Aorta (tissue), 5 donors: ENCODE measurements at regions of chr9 and their contacts with region 1.

Region 1: DNA sequence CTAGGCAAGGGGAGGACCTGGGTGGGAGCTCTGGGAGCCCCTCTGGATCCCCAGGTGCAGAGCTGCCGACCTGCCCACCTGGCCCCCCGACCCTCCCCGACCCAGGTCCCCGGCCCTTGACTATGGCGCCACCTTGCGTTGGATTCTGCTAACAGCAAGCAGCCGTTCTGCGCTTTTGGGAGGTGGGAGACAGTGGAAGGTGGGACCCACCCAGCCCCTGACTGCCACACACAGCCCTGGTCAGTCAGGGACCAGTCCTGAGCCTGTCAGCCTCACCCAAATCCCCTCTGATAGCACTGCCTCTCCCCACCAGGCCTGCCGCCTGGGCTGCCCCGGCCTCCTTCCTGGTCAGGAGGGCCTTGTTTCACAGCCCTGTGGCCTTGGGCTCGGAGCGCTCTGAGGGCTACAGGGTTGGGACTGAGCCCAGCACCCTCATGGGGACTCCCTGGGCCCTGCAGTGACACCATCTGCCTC is 77.9 kb downstream of the HMCN2 start:
- DNase-seq: no peak
- ATAC-seq: no peak
- H3K4me3 ChIP-seq: no peak overlapping the region
- H3K27ac ChIP-seq: no peak overlapping the region
- H3K4me1 ChIP-seq: no peaks in the 10 kb centered on the region
- H3K27me3 ChIP-seq: no peaks in the 10 kb centered on the region

Region 2: GRCh38 chr9:130107234-130107861 is 236.1 kb before region 1 on chr9:
- intact Hi-C with region 1: loop called (anchors 2 to 5 kb)
- DNase-seq: peak; percentile 88 to 94
- ATAC-seq: peak; percentile 81
- H3K4me3 ChIP-seq: no peak overlapping the region
- H3K27ac ChIP-seq: no peak overlapping the region
- H3K4me1 ChIP-seq: no peaks in the 10 kb centered on the region
- H3K27me3 ChIP-seq: no peaks in the 10 kb centered on the region

Region 3: DNA sequence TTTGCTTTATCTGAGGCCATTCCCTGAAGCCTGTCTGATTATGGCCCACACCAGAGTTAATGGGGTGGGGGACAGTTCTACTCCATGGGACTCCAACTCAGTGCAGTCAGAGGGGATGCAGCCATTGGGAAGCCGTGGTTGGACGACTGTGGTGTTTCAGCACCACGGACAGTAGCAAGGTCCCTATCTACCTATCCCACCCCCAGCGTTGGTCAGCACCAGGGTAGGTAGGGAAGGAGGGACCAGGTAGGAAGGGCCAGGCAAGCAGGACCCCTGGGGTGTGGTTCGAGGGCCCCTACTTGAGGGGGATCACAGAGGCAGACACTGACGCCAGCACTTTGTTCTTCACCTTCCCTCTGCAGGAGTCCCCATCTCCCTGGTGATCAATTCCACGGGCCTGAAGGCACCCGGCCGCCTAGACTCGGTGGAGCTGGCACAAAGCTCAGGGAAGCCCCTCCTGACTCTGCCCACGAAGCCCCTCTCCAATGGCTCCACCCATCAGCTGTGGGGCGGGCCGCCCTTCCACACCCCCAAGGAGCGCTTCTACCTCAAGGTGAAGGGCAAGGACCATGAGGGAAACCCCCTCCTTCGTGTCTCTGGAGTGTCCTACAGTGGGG is 44.7 kb before region 1 on chr9:
- intact Hi-C with region 1: no loop called
- DNase-seq: peak; percentile 22 to 70
- ATAC-seq: no peak
- H3K4me3 ChIP-seq: no peak overlapping the region
- H3K27ac ChIP-seq: no peak overlapping the region
- H3K4me1 ChIP-seq: no peaks in the 10 kb centered on the region
- H3K27me3 ChIP-seq: no peaks in the 10 kb centered on the region

Region 4: GRCh38 chr9:130606887-130607600 is 263.6 kb after region 1 on chr9:
- intact Hi-C with region 1: no loop called
- DNase-seq: no peak
- ATAC-seq: no peak
- H3K4me3 ChIP-seq: no peak overlapping the region
- H3K27ac ChIP-seq: no peak overlapping the region
- H3K4me1 ChIP-seq: no peaks in the 10 kb centered on the region
- H3K27me3 ChIP-seq: no peaks in the 10 kb centered on the region